A673 (cell line): ENCODE measurements at regions of chr2 and their contacts with region 1.

Region 1: GRCh38 chr2:203656522-203657287 is 49.7 kb upstream of the CD28 start:
- DNase-seq: no peak
- H3K4me3 ChIP-seq: no peak overlapping the region
- H3K27ac ChIP-seq: no peak overlapping the region
- H3K4me1 ChIP-seq: no peaks in the 10 kb centered on the region
- H3K27me3 ChIP-seq: no peaks in the 10 kb centered on the region
- CTCF ChIP-seq: no peak

Region 2: GRCh38 chr2:203871371-203871983 is 214.8 kb after region 1 on chr2:
- CTCF ChIA-PET with region 1: interaction called, 12 read pairs
- POLR2A ChIA-PET with region 1: no interaction called
- intact Hi-C with region 1: no loop called
- DNase-seq: no peak
- H3K4me3 ChIP-seq: no peak overlapping the region
- H3K27ac ChIP-seq: no peak overlapping the region
- H3K4me1 ChIP-seq: no peaks in the 10 kb centered on the region
- H3K27me3 ChIP-seq: peaks cover 18% of the 10 kb centered on the region
- CTCF ChIP-seq: no peak